ENCODE measurements at regions of chr16 and their contacts with region 1.

Region 1: GRCh38 chr16:72832621-72833248 is 215.2 kb downstream of the ZFHX3 start:
- DNase-seq: peak in 4 of 5 donors; percentile 18 to 41 (median 34)
- H3K4me3 ChIP-seq: no peak overlapping the region
- H3K4me3 Mint-ChIP-seq: no peak overlapping the region
- H3K27ac ChIP-seq: no peak overlapping the region
- H3K27ac Mint-ChIP-seq: no peak overlapping the region
- H3K4me1 ChIP-seq: no peaks in the 10 kb centered on the region
- H3K4me1 Mint-ChIP-seq: no peaks in the 10 kb centered on the region
- H3K27me3 ChIP-seq: no peaks in the 10 kb centered on the region
- H3K27me3 Mint-ChIP-seq: peaks cover 0 to 4% of the 10 kb centered on the region in 2 donors

Region 2: GRCh38 chr16:72811188-72811720 is 21.5 kb before region 1 on chr16:
- CTCF ChIA-PET with region 1: interaction called, 10 read pairs
- POLR2A ChIA-PET with region 1: no interaction called
- intact Hi-C with region 1: no loop called
- DNase-seq: no peak
- H3K4me3 ChIP-seq: no peak overlapping the region
- H3K4me3 Mint-ChIP-seq: no peak overlapping the region
- H3K27ac ChIP-seq: no peak overlapping the region
- H3K27ac Mint-ChIP-seq: no peak overlapping the region
- H3K4me1 ChIP-seq: no peaks in the 10 kb centered on the region
- H3K4me1 Mint-ChIP-seq: no peaks in the 10 kb centered on the region
- H3K27me3 ChIP-seq: no peaks in the 10 kb centered on the region
- H3K27me3 Mint-ChIP-seq: no peaks in the 10 kb centered on the region

Region 3: GRCh38 chr16:72818236-72818845 is 14.4 kb before region 1 on chr16:
- CTCF ChIA-PET with region 1: interaction called, 35 read pairs
- POLR2A ChIA-PET with region 1: no interaction called
- intact Hi-C with region 1: no loop called
- DNase-seq: no peak
- H3K4me3 ChIP-seq: no peak overlapping the region
- H3K4me3 Mint-ChIP-seq: no peak overlapping the region
- H3K27ac ChIP-seq: no peak overlapping the region
- H3K27ac Mint-ChIP-seq: no peak overlapping the region
- H3K4me1 ChIP-seq: no peaks in the 10 kb centered on the region
- H3K4me1 Mint-ChIP-seq: no peaks in the 10 kb centered on the region
- H3K27me3 ChIP-seq: no peaks in the 10 kb centered on the region
- H3K27me3 Mint-ChIP-seq: peaks cover 0 to 1% of the 10 kb centered on the region in 2 donors

Region 4: GRCh38 chr16:72844225-72844920 is 11.6 kb after region 1 on chr16:
- CTCF ChIA-PET with region 1: interaction called, 13 read pairs
- POLR2A ChIA-PET with region 1: no interaction called
- intact Hi-C with region 1: no loop called
- DNase-seq: no peak
- H3K4me3 ChIP-seq: no peak overlapping the region
- H3K4me3 Mint-ChIP-seq: peak overlapping the region in 1 of 8 donors; percentile 41
- H3K27ac ChIP-seq: no peak overlapping the region
- H3K27ac Mint-ChIP-seq: no peak overlapping the region
- H3K4me1 ChIP-seq: no peaks in the 10 kb centered on the region
- H3K4me1 Mint-ChIP-seq: peaks cover 0 to 13% (median 3%) of the 10 kb centered on the region in 4 donors
- H3K27me3 ChIP-seq: no peaks in the 10 kb centered on the region
- H3K27me3 Mint-ChIP-seq: peaks cover 6 to 9% of the 10 kb centered on the region in 2 donors

Region 5: GRCh38 chr16:72853575-72854266 is 21.0 kb after region 1 on chr16:
- CTCF ChIA-PET with region 1: interaction called, 13 read pairs
- POLR2A ChIA-PET with region 1: no interaction called
- intact Hi-C with region 1: no loop called
- DNase-seq: no peak
- H3K4me3 ChIP-seq: no peak overlapping the region
- H3K4me3 Mint-ChIP-seq: no peak overlapping the region
- H3K27ac ChIP-seq: no peak overlapping the region
- H3K27ac Mint-ChIP-seq: peak overlapping the region in 2 of 7 donors; percentile 19 to 88
- H3K4me1 ChIP-seq: no peaks in the 10 kb centered on the region
- H3K4me1 Mint-ChIP-seq: peaks cover 0 to 4% (median 0%) of the 10 kb centered on the region in 4 donors
- H3K27me3 ChIP-seq: no peaks in the 10 kb centered on the region
- H3K27me3 Mint-ChIP-seq: peaks cover 2 to 3% of the 10 kb centered on the region in 2 donors

Region 6: GRCh38 chr16:73196670-73197069 is 363.9 kb after region 1 on chr16:
- CTCF ChIA-PET with region 1: interaction called, 12 read pairs
- POLR2A ChIA-PET with region 1: no interaction called
- intact Hi-C with region 1: no loop called
- DNase-seq: peak in 3 of 5 donors; percentile 2 to 13 (median 6)
- H3K4me3 ChIP-seq: no peak overlapping the region
- H3K4me3 Mint-ChIP-seq: no peak overlapping the region
- H3K27ac ChIP-seq: no peak overlapping the region
- H3K27ac Mint-ChIP-seq: no peak overlapping the region
- H3K4me1 ChIP-seq: no peaks in the 10 kb centered on the region
- H3K4me1 Mint-ChIP-seq: no peaks in the 10 kb centered on the region
- H3K27me3 ChIP-seq: no peaks in the 10 kb centered on the region
- H3K27me3 Mint-ChIP-seq: no peaks in the 10 kb centered on the region

Region 7: GRCh38 chr16:73956587-73957494 is 1124.1 kb after region 1 on chr16:
- CTCF ChIA-PET with region 1: no interaction called
- POLR2A ChIA-PET with region 1: no interaction called
- intact Hi-C with region 1: loop called (anchors 10 kb)
- DNase-seq: peak in 4 of 5 donors; percentile 4 to 23 (median 8)
- H3K4me3 ChIP-seq: no peak overlapping the region
- H3K4me3 Mint-ChIP-seq: no peak overlapping the region
- H3K27ac ChIP-seq: no peak overlapping the region
- H3K27ac Mint-ChIP-seq: no peak overlapping the region
- H3K4me1 ChIP-seq: no peaks in the 10 kb centered on the region
- H3K4me1 Mint-ChIP-seq: no peaks in the 10 kb centered on the region
- H3K27me3 ChIP-seq: no peaks in the 10 kb centered on the region
- H3K27me3 Mint-ChIP-seq: peaks cover 1 to 3% of the 10 kb centered on the region in 2 donors

Measured in CD4-positive, alpha-beta memory T cell (primary cell).